Activated T-helper 2 cell treated with anti-CD3 and anti-CD28 coated beads, Interferon-gamma antibody, Interleukin-2, Interleukin-4, amounts not matched to agents 10 μg/mL and 5 μg/mL and 100 μg/mL, durations not matched to agents 14 hours and 24 hours and 36 hours (primary cell): ENCODE measurements at regions of chr4 and their contacts with region 1.

Region 1: DNA sequence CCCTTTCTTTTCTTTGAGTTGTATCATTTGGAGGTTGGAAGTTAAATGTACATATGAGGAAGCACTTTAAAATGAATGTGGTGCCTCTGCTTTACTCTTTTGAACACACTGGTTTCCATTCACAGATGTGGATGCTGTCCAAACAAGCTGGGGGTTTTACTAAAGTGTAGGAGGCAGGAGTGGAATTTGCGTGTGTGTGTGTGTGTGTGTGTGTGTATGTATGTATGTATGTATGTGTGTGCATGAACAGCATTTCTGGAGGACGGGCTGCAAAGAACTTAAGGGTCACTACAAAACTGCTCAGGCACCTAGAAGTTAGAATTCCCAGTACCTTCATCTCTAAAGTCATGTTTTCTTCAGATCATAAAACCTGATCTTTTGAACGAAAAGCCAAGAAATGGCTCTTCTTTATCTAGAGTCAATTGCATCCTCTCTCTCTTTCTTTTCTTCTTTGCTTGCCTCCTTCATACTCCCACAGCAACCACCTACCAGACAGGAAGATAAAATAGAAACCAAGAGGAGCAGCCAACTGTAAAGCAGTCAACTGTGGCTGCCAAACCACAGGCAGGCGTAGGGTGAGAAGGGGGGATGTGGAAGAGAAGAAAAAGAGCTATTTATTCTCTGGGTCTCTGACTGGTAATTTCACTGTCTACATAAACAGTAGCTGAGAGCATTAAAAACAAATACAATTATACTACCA is 177.0 kb upstream of the RASGEF1B start:
- DNase-seq: peak; percentile 22
- H3K4me3 Mint-ChIP-seq: peak overlapping the region; percentile 27
- H3K27ac Mint-ChIP-seq: peak overlapping the region; percentile 1
- H3K4me1 Mint-ChIP-seq: peaks cover 46% of the 10 kb centered on the region
- H3K27me3 Mint-ChIP-seq: no peaks in the 10 kb centered on the region

Region 2: GRCh38 chr4:81392164-81392563 is 256.6 kb before region 1 on chr4:
- intact Hi-C with region 1: no loop called
- DNase-seq: no peak
- H3K4me3 Mint-ChIP-seq: no peak overlapping the region
- H3K27ac Mint-ChIP-seq: no peak overlapping the region
- H3K4me1 Mint-ChIP-seq: no peaks in the 10 kb centered on the region
- H3K27me3 Mint-ChIP-seq: no peaks in the 10 kb centered on the region

Region 3: DNA sequence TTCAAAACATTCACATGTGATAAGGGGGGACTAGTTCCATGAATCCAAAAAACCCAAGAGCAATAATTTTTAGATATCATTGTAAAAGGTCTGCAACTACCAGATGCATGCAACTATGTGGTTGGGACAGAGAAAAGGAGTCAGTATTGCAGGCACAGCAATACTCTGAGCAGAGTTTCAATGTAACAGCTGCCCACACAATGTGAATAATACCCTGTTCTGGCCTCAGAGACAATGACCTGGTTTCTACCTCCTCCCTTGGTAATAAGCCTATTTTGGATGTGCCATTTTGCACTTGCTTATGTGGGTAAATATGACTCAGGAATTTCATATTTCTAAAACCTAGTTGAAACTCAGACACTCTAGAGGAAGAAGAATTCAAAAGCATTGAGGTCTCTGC is 17.8 kb after region 1 on chr4:
- intact Hi-C with region 1: loop called (anchors 2 kb)
- DNase-seq: no peak
- H3K4me3 Mint-ChIP-seq: no peak overlapping the region
- H3K27ac Mint-ChIP-seq: no peak overlapping the region
- H3K4me1 Mint-ChIP-seq: peaks cover 11% of the 10 kb centered on the region
- H3K27me3 Mint-ChIP-seq: peaks cover 3% of the 10 kb centered on the region